Activated T-helper 1 cell treated with anti-CD3 and anti-CD28 coated beads, Interleukin-12 subunit alpha, Interleukin-12 subunit beta, Interleukin-2, Interleukin-4 antibody, amounts not matched to agents 30 ng/mL and 10 ng/mL and 1 ng/mL, durations not matched to agents 14 hours and 24 hours and 36 hours (primary cell): ENCODE measurements at regions of chr12 and their contacts with region 1.

Region 1: DNA sequence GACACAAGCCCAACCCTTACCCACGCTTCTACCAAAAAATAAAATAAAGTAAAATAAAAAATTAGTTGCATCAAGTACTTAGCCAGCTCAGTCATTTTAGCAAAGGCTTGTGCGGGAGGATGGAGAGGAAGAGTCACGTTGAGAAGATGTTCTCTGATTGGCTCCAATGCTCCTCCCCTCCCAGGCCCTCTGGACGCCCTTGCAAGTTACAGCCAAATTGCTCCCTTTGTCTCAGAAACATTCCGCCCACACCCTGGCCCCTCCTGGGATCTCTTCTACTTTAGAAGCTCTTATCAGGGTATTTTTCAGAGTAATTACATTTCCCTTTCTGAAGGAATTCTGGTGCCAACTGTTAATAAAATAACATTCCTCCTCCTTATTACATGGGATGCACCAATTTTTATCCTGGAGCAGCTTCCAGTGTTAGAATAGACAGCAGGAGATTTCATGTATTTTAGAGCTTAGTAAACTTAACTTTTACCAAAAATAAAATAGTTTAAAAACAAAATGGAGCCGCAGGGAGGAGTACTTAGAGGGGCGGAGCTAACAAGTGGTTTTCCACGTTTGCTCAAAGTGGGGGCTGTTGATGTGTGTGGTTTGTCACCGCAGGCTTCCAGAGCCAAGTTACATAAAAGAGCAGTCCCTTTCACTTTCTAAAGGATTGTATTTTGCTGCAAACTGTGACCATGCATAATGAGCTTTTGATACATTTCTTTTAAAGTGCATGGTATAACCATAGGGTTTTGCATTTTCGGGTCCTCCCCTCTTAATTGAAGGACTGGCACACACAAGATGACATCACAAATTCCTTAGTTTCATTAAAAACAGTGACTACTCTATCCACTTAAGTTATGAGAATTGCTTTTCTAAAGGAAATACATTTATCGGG is 71.7 kb upstream of the RAP1B start:
- DNase-seq: peak; percentile 54
- H3K4me3 Mint-ChIP-seq: peak overlapping the region; percentile 23
- H3K27ac Mint-ChIP-seq: peak overlapping the region; percentile 52
- H3K4me1 Mint-ChIP-seq: peaks cover 48% of the 10 kb centered on the region
- H3K27me3 Mint-ChIP-seq: peaks cover 2% of the 10 kb centered on the region

Region 2: DNA sequence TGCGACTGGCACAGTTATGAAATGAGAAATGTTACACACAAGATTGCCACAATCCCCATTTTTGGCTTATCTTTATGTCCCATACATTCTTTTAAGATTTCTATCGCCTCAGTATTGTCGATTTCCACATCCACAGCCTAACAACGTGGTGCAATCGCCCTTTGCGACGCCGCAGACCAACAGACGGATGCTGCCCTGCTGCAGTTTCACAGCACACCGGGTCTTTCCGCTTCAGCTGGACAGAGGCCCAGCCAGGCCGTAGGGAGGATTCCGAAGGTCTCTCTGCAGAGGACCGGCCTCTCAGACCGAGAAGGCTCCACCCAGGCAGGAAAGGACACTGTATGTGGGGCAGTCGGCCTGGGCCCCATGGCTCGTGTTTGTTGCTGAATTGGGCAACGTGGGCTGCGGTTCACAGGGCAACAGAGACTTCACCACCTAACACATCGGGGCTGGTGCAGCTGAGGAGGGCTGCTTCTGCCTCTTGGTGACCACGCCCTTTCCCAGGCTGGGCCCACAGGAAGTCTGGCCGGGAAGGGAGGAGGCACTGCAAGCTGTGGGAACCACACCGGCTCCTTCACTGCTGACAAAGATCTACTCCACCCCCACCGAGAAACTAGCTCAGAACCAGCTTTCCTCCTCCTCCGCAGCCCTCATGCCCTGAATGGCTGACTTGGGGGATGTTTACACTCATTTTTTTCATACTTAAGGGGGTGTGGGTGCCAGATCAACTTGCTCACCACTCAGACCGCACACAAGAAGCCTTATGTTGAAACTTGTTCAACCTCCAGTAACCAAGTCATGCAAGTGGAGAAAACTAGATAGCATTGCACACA is 173.9 kb before region 1 on chr12:
- intact Hi-C with region 1: loop called (anchors 1 kb)
- DNase-seq: peak; percentile 85
- H3K4me3 Mint-ChIP-seq: peak overlapping the region; percentile 77
- H3K27ac Mint-ChIP-seq: peak overlapping the region; percentile 92
- H3K4me1 Mint-ChIP-seq: peaks cover 76% of the 10 kb centered on the region
- H3K27me3 Mint-ChIP-seq: no peaks in the 10 kb centered on the region

Region 3: GRCh38 chr12:68587448-68587873 is 48.5 kb after region 1 on chr12:
- intact Hi-C with region 1: loop called (anchors 2 kb)
- DNase-seq: peak; percentile 38
- H3K4me3 Mint-ChIP-seq: peak overlapping the region; percentile 7
- H3K27ac Mint-ChIP-seq: peak overlapping the region; percentile 31
- H3K4me1 Mint-ChIP-seq: peaks cover 32% of the 10 kb centered on the region
- H3K27me3 Mint-ChIP-seq: no peaks in the 10 kb centered on the region

Region 4: GRCh38 chr12:68665016-68665569 is 126.1 kb after region 1 on chr12:
- intact Hi-C with region 1: no loop called
- DNase-seq: no peak
- H3K4me3 Mint-ChIP-seq: no peak overlapping the region
- H3K27ac Mint-ChIP-seq: peak overlapping the region; percentile 25
- H3K4me1 Mint-ChIP-seq: peaks cover 22% of the 10 kb centered on the region
- H3K27me3 Mint-ChIP-seq: no peaks in the 10 kb centered on the region